GM13976 (cell line): ENCODE measurements at regions of chr11 and their contacts with region 1.

Region 1: GRCh38 chr11:27183672-27184457 is 143.2 kb downstream of the BBOX1 start:
- DNase-seq: peak; percentile 31
- CTCF ChIP-seq: peak; percentile 53

Region 2: GRCh38 chr11:27497284-27497866 is 313.5 kb after region 1 on chr11:
- in situ Hi-C with region 1: loop called (anchors 10 kb)
- DNase-seq: peak; percentile 30
- CTCF ChIP-seq: peak; percentile 25